SK-N-SH (cell line): ENCODE measurements at regions of chr19 and their contacts with region 1.

Region 1: DNA sequence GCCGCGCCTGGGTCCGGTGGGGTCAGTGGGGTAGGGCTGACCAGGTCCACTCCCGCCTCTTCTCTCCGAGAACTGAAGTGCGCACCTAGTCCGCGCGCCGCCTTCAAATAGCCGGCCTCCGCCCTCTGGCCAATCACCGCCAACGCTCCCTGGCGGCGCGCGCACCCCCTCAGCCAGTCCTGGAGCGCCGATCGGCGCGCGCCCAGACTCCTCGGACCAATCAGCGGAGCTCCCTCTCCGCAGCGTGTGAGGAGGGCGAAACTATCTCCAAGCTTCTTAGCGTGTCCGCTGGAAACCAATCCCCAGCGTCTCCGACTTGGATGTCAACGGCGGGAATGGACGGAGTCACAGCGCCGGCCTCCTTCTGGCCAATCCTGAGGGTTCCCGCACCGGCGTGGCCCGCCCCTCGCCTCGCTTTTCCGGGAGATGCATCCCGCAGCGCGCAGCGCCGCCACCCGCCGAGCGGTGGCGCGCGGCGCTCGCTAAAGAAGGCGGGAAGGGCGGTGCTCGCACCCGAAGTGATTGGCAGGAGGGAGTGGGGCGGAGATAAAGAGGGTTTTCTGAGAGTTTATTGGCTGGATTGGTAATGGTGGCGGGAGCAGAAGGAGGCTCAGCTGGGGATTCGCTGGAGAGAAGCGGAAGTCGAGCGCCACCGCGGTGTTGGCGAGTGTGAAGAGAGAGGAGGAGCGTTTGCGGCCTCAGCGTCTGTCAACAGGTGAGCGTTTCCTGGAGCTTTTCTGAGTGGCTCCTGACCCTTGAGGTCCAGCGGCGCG is at the start of gene ASF1B:
- DNase-seq: peak; percentile 98
- H3K4me3 ChIP-seq: peak within 1 kb of the TSS; percentile 68 to 89
- H3K27ac ChIP-seq: peak within 1 kb of the TSS; percentile 59 to 83
- H3K4me1 ChIP-seq: peaks cover 0 to 7% of the 10 kb centered on the region in 2 experiments; a peak in 2 of 4 replicates
- H3K27me3 ChIP-seq: no peaks in the 10 kb centered on the region
- CTCF ChIP-seq: peak; percentile 70
- EP300 ChIP-seq: no peak
- RAD21 ChIP-seq: peak; percentile 93
- polyA plus RNA-seq, gene ASF1B: 17.8 and 19.0 TPM in 2 replicates

Region 2: DNA sequence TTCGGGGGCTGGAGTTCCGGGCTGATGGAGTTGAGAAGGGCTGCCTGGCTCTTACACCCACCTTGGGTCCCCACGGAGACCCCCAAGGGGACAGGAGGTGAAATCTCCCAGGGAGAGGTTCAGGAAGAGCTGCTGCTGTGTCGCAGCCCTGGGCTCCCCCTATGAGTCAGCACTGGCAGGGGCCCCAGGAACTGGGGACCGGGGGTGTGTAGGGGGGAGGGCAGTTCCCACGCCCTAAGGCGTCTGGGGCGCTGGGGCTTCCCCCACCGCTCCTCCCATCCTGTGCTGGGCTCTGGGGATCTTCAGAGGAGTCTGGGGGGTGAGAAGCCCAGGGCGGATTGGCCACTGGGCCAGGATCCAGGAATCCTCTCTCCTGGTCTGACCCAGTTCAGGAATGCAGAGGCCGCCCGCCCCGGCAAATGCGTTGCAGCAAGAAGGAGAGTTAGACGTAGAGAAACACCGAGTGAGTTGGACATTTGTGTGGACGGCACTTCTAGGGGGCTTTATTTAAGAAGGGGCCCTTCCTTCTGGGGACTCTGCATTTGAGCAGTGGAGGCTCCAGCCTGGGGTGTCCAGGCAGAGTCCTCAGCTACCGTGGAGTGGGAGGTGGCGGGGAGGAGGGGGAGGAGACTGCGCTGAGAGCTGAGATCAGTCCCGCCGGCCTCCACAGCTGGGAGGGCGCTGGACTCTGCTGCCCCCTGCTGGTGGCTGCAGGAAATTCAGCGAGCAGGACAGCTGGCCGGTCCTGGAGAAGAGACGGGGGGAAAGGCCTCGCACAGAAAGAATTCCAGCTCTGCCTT is 274.8 kb before region 1 on chr19:
- CTCF ChIA-PET with region 1: no interaction called
- POLR2A ChIA-PET with region 1: no interaction called
- DNase-seq: peak; percentile 94
- H3K4me3 ChIP-seq: peak overlapping the region; percentile 39 to 61
- H3K27ac ChIP-seq: peak overlapping the region; percentile 82 to 98
- H3K4me1 ChIP-seq: peaks cover 9 to 20% of the 10 kb centered on the region in 2 experiments; a peak in 3 of 4 replicates
- H3K27me3 ChIP-seq: no peaks in the 10 kb centered on the region
- CTCF ChIP-seq: peak; percentile 91
- EP300 ChIP-seq: peak; percentile 14 to 69; a peak in 2 of 4 replicates
- RAD21 ChIP-seq: peak; percentile 95

Region 3: DNA sequence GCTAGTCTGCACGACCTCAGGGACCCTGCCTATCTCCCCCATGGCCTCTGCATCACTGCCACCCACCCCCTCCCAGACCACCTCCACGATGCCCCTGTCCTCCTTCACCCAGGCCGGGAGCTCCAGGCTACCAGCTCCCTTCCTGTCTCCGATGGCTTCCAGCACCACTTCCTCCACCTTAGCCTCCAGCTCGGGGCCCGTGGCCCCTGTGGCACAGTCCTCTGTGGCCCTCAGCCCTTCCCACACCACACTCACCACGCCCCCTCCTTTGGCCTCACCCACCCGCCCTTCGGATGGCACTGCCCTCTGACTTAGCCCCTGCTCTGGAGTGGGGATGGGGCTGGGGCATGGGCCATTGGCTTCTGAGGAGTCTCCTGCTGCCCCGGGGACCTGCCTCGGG is 82.0 kb before region 1 on chr19:
- CTCF ChIA-PET with region 1: no interaction called
- POLR2A ChIA-PET with region 1: no interaction called
- DNase-seq: peak; percentile 17
- H3K4me3 ChIP-seq: no peak overlapping the region
- H3K27ac ChIP-seq: no peak overlapping the region
- H3K4me1 ChIP-seq: peaks cover 6 to 10% of the 10 kb centered on the region in 2 experiments; a peak in 2 of 4 replicates
- H3K27me3 ChIP-seq: no peaks in the 10 kb centered on the region
- CTCF ChIP-seq: no peak
- EP300 ChIP-seq: no peak
- RAD21 ChIP-seq: no peak

Region 4: DNA sequence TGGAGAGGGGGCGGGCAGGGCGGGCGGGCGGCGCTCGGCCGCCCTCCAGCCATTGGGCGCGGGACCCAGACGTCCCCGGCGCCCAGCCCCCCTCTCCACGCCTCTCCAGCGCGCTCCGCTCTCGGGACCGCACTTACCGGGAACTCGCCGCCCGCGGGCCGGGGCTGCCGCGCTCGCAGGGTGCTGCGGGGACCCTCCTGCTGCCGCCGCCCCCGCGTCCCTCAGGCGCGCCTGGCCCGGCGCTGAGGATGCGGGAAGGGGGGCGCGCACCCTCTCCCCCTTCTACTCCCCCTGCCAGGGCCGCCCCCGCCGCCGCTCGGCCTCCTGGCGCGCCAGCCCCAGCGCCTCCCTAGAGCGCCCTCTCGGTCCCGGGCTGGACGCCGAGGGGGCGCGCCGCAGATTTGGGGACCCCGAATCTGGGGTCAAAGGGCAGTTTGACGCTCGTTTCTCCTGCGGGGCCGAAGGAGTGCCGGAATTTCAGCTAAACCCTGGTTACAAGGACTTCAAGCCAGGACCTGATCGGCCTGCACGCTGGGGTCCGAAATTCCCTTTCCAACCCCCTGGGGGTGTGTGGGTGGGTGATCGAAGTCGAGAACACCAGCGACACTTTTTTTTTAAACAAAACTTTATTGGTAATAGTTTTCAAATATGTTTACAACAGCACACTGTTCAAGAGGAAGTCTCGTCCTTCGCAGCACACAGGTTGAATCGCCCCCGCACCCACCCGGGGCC is 45.4 kb before region 1 on chr19:
- CTCF ChIA-PET with region 1: interaction called, 10 read pairs
- POLR2A ChIA-PET with region 1: interaction called, 4 read pairs
- DNase-seq: peak; percentile 93
- H3K4me3 ChIP-seq: peak overlapping the region; percentile 79 to 91
- H3K27ac ChIP-seq: peak overlapping the region; percentile 67 to 92; a peak in 3 of 4 replicates
- H3K4me1 ChIP-seq: peaks cover 0 to 10% of the 10 kb centered on the region in 2 experiments; a peak in 1 of 4 replicates
- H3K27me3 ChIP-seq: no peaks in the 10 kb centered on the region
- CTCF ChIP-seq: peak; percentile 55
- EP300 ChIP-seq: no peak; a peak in 1 of 4 replicates
- RAD21 ChIP-seq: no peak

Region 5: DNA sequence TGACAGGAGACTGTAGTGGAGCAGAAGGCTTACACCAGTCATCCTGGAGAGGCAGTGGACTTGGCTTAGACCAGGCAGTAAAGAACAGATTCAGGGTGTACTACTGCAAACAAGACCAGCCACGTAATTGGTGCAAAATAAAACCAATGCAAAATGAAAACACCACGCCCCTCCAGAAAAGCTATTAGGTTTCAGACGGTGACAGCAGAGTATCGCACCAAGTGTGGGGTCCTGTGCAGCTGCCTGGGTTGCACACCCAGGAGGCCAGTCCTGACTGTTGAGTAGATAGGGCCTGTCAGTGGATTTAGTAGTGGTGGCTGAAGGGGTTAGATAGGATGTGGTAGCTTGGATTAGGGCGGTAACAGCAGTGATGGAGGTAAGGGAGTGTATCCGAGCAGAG is 13.8 kb before region 1 on chr19:
- CTCF ChIA-PET with region 1: interaction called, 22 read pairs
- POLR2A ChIA-PET with region 1: interaction called, 13 read pairs
- DNase-seq: no peak
- H3K4me3 ChIP-seq: no peak overlapping the region
- H3K27ac ChIP-seq: no peak overlapping the region
- H3K4me1 ChIP-seq: peaks cover 11 to 22% of the 10 kb centered on the region in 2 experiments
- H3K27me3 ChIP-seq: no peaks in the 10 kb centered on the region
- CTCF ChIP-seq: no peak
- EP300 ChIP-seq: no peak
- RAD21 ChIP-seq: no peak

Region 6: DNA sequence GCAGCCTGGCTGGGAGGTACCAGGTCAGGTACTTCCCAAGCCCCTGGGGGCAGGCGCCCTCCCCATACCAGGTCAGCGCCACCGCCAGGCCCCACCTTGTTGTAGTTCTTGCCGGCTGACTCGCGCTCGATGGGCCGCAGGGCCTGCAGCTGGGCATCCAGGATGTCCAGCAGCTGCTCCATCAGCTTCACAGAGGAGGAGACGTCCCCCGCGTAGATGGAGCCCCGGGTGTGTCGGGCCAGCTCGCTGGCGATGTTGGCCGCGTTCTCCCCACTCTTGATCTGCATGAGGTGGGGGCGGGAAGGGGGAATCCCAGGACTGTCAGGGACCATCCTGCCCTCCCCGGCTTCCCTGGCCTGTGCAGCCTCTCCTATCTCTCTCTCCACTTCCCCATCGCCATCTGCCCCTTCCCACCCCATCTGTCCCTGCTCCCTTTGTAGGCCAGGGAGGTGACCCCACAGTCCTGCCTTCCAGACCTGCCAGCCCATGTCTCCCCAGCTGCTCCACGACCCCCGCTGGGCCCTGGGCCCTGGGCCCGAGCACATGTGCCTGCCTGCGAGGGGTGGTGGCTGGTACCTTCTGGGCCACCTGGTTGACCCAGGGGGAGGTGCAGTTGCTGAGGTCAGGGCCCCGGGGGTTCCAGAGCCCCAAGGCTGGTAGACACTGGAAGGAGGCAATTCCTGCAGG is 23.5 kb after region 1 on chr19:
- CTCF ChIA-PET with region 1: interaction called, 12 read pairs
- POLR2A ChIA-PET with region 1: interaction called, 3 read pairs
- DNase-seq: no peak
- H3K4me3 ChIP-seq: no peak overlapping the region
- H3K27ac ChIP-seq: no peak overlapping the region
- H3K4me1 ChIP-seq: peaks cover 0 to 6% of the 10 kb centered on the region in 2 experiments; a peak in 1 of 4 replicates
- H3K27me3 ChIP-seq: no peaks in the 10 kb centered on the region
- CTCF ChIP-seq: no peak
- EP300 ChIP-seq: no peak
- RAD21 ChIP-seq: no peak

Region 7: DNA sequence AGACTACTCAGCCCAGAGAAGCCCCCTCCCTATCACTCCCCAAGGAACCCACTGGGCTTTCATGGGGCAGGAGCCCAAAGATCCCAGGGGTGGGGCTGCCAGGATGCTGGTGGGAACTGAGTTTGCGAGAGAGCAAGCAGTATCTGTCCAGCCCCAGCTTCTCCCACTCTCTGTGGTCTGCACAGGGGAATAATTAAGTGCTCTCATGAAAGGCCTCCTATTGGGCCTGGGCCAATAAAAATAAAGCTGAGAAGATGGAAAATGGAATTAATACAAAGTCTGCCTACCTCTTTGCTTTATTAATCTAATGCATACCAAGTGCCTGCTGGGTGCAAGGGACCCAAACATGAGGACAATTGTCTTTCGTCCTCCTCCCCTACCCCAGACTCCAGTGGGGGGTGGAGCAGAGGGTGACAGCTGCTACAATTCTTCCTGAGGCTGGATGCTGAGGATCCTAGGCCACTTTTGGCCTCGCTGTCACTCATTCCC is 277.0 kb after region 1 on chr19:
- CTCF ChIA-PET with region 1: interaction called, 18 read pairs
- POLR2A ChIA-PET with region 1: no interaction called
- DNase-seq: peak; percentile 73
- H3K4me3 ChIP-seq: no peak overlapping the region
- H3K27ac ChIP-seq: peak overlapping the region; percentile 51 to 54; a peak in 3 of 4 replicates
- H3K4me1 ChIP-seq: peaks cover 14 to 15% of the 10 kb centered on the region in 2 experiments; a peak in 2 of 4 replicates
- H3K27me3 ChIP-seq: no peaks in the 10 kb centered on the region
- CTCF ChIP-seq: no peak
- EP300 ChIP-seq: no peak
- RAD21 ChIP-seq: no peak